ENCODE measurements at regions of chr1 and their contacts with region 1.

Region 1: DNA sequence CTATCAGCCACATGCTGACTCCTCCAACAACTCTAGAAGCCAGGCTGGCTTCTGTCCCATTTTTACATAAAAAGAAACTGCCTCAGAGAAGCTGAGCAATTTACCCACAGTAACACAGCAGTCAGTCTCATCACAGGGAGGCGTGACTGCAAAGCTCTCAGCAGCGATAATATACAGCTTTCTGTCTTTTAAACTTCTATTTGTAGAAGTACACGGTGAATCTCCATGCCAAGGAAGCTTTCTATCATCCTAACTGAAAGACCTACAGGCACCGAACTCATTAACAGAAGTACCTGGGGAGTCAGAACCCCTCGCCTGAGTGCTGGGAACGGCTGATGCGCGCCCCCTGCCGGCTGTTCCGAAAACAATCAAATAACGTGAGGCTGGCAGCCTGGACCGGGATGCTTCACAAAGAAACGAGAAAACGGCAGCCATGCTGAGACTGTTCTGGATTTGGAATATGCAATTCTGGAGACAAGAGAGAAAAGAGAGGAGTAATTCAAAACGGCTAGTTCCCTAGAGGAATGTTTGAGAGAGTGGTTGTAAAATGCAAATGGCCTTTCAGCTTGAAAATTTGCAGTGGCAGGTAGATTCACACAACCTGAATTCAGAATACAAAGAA is 43.5 kb upstream of the RAB4A start:
- DNase-seq: peak; percentile 71 to 86 (median 71)
- H3K4me3 ChIP-seq: no peak overlapping the region
- H3K4me3 Mint-ChIP-seq: no peak overlapping the region
- H3K27ac ChIP-seq: no peak overlapping the region
- H3K27ac Mint-ChIP-seq: peak overlapping the region in 2 of 8 donors; percentile 12 to 68
- H3K4me1 ChIP-seq: peaks cover 13% of the 10 kb centered on the region
- H3K4me1 Mint-ChIP-seq: peaks cover 7 to 17% (median 8%) of the 10 kb centered on the region in 3 donors
- H3K27me3 ChIP-seq: no peaks in the 10 kb centered on the region
- H3K27me3 Mint-ChIP-seq: peaks cover 6 to 21% of the 10 kb centered on the region in 2 donors

Region 2: DNA sequence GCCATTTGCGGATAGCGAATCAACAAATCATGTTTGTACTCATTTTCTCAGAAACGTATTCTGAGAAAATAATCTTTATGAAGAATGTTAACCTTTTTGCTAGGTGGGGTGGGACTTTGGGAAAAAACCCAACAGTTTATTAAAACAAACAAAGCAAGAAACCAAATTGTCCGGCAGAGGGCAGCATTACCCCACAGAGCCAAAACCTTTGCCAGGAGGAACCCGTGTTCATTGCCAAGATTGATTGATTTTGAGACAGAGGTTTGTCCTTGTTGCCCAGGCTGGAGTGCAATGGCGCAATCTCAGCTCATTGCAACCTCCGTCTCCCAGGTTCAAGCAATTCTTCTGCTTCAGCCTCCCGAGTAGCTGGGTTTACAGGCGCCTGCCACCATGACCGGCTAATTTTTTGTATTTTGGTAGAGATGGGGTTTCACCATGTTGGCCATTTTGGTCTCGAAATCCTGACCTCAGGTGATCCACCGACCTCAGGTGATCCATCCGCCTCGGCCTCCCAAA is 563.0 kb before region 1 on chr1:
- CTCF ChIA-PET with region 1: interaction called, 45 read pairs
- POLR2A ChIA-PET with region 1: interaction called, 3 read pairs
- DNase-seq: peak; percentile 58 to 81 (median 68)
- H3K4me3 ChIP-seq: no peak overlapping the region
- H3K4me3 Mint-ChIP-seq: no peak overlapping the region
- H3K27ac ChIP-seq: no peak overlapping the region
- H3K27ac Mint-ChIP-seq: peak overlapping the region in 1 of 8 donors; percentile 35
- H3K4me1 ChIP-seq: no peaks in the 10 kb centered on the region
- H3K4me1 Mint-ChIP-seq: no peaks in the 10 kb centered on the region
- H3K27me3 ChIP-seq: no peaks in the 10 kb centered on the region
- H3K27me3 Mint-ChIP-seq: peaks cover 6 to 15% of the 10 kb centered on the region in 2 donors

Region 3: GRCh38 chr1:228734881-228735801 is 492.3 kb before region 1 on chr1 and contains the start of gene RHOU:
- CTCF ChIA-PET with region 1: interaction called, 74 read pairs
- POLR2A ChIA-PET with region 1: interaction called, 3 read pairs
- DNase-seq: peak; percentile 51 to 73 (median 66)
- H3K4me3 ChIP-seq: peak within 1 kb of the TSS; percentile 55
- H3K4me3 Mint-ChIP-seq: peak within 1 kb of the TSS; percentile 89 to 96 (median 94)
- H3K27ac ChIP-seq: no peak within 1 kb of the TSS
- H3K27ac Mint-ChIP-seq: peak within 1 kb of the TSS in 7 of 8 donors; percentile 86 to 93 (median 88)
- H3K4me1 ChIP-seq: no peaks in the 10 kb centered on the region
- H3K4me1 Mint-ChIP-seq: peaks cover 32 to 45% (median 36%) of the 10 kb centered on the region in 3 donors
- H3K27me3 ChIP-seq: no peaks in the 10 kb centered on the region
- H3K27me3 Mint-ChIP-seq: peaks cover 5 to 6% of the 10 kb centered on the region in 2 donors
- total RNA-seq, gene RHOU: 0.64 to 0.88 TPM

Region 4: GRCh38 chr1:229171934-229172333 is 55.5 kb before region 1 on chr1:
- CTCF ChIA-PET with region 1: no interaction called
- POLR2A ChIA-PET with region 1: no interaction called
- DNase-seq: no peak
- H3K4me3 ChIP-seq: no peak overlapping the region
- H3K4me3 Mint-ChIP-seq: no peak overlapping the region
- H3K27ac ChIP-seq: no peak overlapping the region
- H3K27ac Mint-ChIP-seq: no peak overlapping the region
- H3K4me1 ChIP-seq: no peaks in the 10 kb centered on the region
- H3K4me1 Mint-ChIP-seq: no peaks in the 10 kb centered on the region
- H3K27me3 ChIP-seq: no peaks in the 10 kb centered on the region
- H3K27me3 Mint-ChIP-seq: peaks cover 9 to 10% of the 10 kb centered on the region in 2 donors

Region 5: GRCh38 chr1:229203030-229203751 is 24.2 kb before region 1 on chr1:
- CTCF ChIA-PET with region 1: interaction called, 11 read pairs
- POLR2A ChIA-PET with region 1: no interaction called
- DNase-seq: no peak
- H3K4me3 ChIP-seq: no peak overlapping the region
- H3K4me3 Mint-ChIP-seq: no peak overlapping the region
- H3K27ac ChIP-seq: no peak overlapping the region
- H3K27ac Mint-ChIP-seq: peak overlapping the region in 2 of 8 donors; percentile 27 to 67
- H3K4me1 ChIP-seq: peaks cover 31% of the 10 kb centered on the region
- H3K4me1 Mint-ChIP-seq: peaks cover 26 to 34% (median 33%) of the 10 kb centered on the region in 3 donors
- H3K27me3 ChIP-seq: no peaks in the 10 kb centered on the region
- H3K27me3 Mint-ChIP-seq: no peaks in the 10 kb centered on the region

Region 6: GRCh38 chr1:229258031-229258756 is 30.8 kb after region 1 on chr1:
- CTCF ChIA-PET with region 1: interaction called, 12 read pairs
- POLR2A ChIA-PET with region 1: no interaction called
- DNase-seq: peak; percentile 44 to 71 (median 61)
- H3K4me3 ChIP-seq: peak overlapping the region; percentile 19
- H3K4me3 Mint-ChIP-seq: peak overlapping the region in 6 of 7 donors; percentile 1 to 66 (median 49)
- H3K27ac ChIP-seq: no peak overlapping the region
- H3K27ac Mint-ChIP-seq: peak overlapping the region in 5 of 8 donors; percentile 52 to 90 (median 77)
- H3K4me1 ChIP-seq: peaks cover 31% of the 10 kb centered on the region
- H3K4me1 Mint-ChIP-seq: peaks cover 28 to 36% (median 33%) of the 10 kb centered on the region in 3 donors
- H3K27me3 ChIP-seq: no peaks in the 10 kb centered on the region
- H3K27me3 Mint-ChIP-seq: peaks cover 0 to 2% of the 10 kb centered on the region in 2 donors